K562 (cell line): ENCODE measurements at regions of chr5 and their contacts with region 1.

Region 1: GRCh38 chr5:135887351-135887864 is 8.2 kb downstream of the IL9 start:
- DNase-seq: peak; percentile 67 to 79 (median 70)
- ATAC-seq: peak; percentile 99
- H3K4me3 ChIP-seq: no peak overlapping the region
- H3K27ac ChIP-seq: no peak overlapping the region
- H3K4me1 ChIP-seq: no peaks in the 10 kb centered on the region
- H3K27me3 ChIP-seq: peaks cover 0 to 19% of the 10 kb centered on the region in 2 experiments; a peak in 4 of 5 replicates
- CTCF ChIP-seq: peak; percentile 84 to 92 (median 88)
- EP300 ChIP-seq: no peak
- POLR2A ChIP-seq: no peak
- RAD21 ChIP-seq: peak; percentile 84 to 92

Region 2: GRCh38 chr5:136212252-136212721 is 324.9 kb after region 1 on chr5:
- CTCF ChIA-PET with region 1: interaction called, 13 read pairs
- POLR2A ChIA-PET with region 1: no interaction called
- in situ Hi-C with region 1: loop called (anchors 5 kb)
- intact Hi-C with region 1: loop called (anchors 1 kb)
- DNase-seq: peak; percentile 70 to 84 (median 80)
- ATAC-seq: peak; percentile 92
- H3K4me3 ChIP-seq: no peak overlapping the region
- H3K27ac ChIP-seq: no peak overlapping the region
- H3K4me1 ChIP-seq: peaks cover 0 to 2% of the 10 kb centered on the region in 2 experiments; a peak in 1 of 5 replicates
- H3K27me3 ChIP-seq: peaks cover 15 to 77% of the 10 kb centered on the region in 2 experiments; a peak in 4 of 5 replicates
- CTCF ChIP-seq: peak; percentile 80 to 91 (median 89)
- EP300 ChIP-seq: peak; percentile 19; the same call in 1 of the 2 replicates
- POLR2A ChIP-seq: no peak
- RAD21 ChIP-seq: peak; percentile 84 to 93